RWPE1 (cell line): ENCODE measurements at regions of chr11 and their contacts with region 1.

Region 1: GRCh38 chr11:102614485-102614884 is 10.6 kb downstream of the MMP20 start:
- DNase-seq: peak; percentile 3
- H3K27ac ChIP-seq: no peak overlapping the region
- CTCF ChIP-seq: peak; percentile 24

Region 2: GRCh38 chr11:102287964-102288724 is 326.3 kb before region 1 on chr11:
- CTCF ChIA-PET with region 1: interaction called, 10 read pairs
- POLR2A ChIA-PET with region 1: no interaction called
- DNase-seq: peak; percentile 68
- H3K27ac ChIP-seq: no peak overlapping the region
- CTCF ChIP-seq: peak; percentile 75

Region 3: DNA sequence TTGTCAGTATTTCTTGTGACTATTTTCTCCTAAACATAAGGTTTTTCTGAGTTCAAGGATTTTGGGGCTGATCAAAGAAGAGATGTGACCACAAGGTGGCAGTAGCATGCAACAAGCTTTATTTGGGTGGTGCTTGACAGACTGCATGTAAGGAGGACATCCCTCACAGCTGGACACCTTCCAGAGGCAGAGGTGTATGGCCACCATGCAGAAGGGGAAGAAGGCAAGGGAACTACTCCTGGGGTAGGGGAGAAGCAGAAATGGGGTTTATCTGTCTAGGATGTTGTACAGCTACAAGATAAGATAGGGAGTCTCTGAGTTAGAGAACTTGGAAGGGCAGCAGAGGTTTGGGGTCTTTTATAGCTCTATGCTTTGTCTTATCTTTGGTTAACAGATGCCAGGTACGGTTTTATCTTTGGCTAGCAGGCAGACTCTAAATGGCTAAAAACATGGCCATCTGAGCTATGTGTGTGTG is 272.6 kb before region 1 on chr11:
- CTCF ChIA-PET with region 1: interaction called, 15 read pairs
- POLR2A ChIA-PET with region 1: no interaction called
- DNase-seq: peak; percentile 64
- H3K27ac ChIP-seq: no peak overlapping the region
- CTCF ChIP-seq: peak; percentile 78

Region 4: DNA sequence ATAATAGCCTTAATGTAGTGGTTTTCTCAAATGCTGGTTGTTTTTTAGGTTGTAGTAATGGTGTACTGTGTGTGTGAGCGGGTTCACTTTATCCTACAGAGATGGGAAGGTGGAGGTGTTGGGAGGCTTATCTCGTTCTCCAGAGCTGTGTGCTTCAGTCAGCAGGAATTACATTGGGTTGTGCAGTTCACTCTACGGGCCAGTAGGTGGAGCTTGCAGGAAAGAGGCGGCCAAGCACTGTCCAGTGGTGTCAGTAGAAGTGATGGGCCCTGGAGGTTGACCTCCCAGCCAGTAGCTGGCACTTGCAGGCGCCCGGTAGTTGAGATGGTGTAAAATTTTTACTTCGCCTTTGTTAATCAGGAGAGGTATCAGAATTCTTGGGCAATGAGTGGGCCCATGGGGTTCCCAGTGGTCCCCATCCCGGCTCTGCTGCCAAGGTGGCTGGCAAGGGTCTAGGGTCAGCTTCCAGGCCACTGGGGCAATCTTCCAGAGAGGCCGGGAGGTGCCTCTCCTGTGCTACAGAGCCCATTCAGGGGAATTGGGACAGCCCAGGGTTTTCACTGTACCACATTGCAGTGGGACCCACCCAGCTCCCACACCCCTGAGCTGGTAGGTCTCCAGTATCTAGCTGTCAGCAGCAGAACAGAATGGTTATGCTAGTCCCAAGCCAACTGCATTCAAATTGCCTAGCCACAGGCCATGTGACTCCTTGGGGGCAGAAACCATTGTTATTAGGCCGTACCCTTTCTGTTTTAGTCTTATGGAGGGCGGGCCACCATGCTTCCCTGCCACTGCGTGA is 223.6 kb before region 1 on chr11:
- CTCF ChIA-PET with region 1: interaction called, 18 read pairs
- POLR2A ChIA-PET with region 1: no interaction called
- DNase-seq: peak; percentile 39
- H3K27ac ChIP-seq: no peak overlapping the region
- CTCF ChIP-seq: peak; percentile 79

Region 5: GRCh38 chr11:102495161-102496042 is 119.1 kb before region 1 on chr11:
- CTCF ChIA-PET with region 1: interaction called, 12 read pairs
- POLR2A ChIA-PET with region 1: no interaction called
- DNase-seq: peak; percentile 66
- H3K27ac ChIP-seq: no peak overlapping the region
- CTCF ChIP-seq: peak; percentile 72